SK-N-SH (cell line): ENCODE measurements at regions of chr7 and their contacts with region 1.

Region 1: DNA sequence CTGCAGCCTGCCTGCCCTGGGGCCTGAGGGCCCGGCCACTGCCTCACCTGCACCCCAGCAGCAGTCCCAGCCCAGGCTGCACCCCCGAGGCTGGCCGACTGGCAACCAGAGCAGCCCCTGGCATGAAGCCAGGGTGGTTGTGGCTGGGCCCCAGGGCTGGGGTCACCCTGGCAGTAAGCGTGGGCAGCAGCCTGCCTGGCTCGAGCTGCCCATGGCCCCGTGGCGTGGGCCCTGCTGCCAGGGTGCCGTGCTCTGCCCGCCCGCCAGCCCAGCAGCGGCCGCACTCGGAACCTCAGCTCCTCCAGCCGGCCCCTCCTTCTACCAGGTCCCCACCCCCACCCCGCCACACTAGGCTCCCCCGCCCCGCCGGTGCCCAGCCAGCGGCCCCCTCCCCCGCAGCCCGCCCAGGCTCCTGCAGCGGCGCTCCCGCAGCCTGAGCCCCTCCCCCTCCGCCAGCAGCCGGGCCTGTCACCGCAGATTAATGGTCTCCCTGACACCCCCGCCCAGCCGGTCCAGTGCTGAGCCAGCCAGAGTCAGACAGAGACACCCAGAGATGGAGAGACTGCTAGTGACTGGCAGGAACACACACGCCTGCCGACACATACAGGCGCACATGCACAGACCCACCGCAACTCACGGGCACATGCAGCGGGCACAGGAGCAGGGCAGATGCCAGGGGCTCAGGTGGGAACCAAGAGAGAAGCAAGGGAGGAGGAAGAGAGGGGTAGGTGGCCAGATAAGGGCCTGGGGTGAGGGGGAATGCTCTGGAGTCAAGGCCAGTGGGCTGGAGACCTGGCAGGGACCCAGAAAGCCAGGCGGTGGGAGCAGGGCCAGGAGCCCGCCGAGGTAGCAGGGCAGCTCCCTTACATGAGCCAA is 22.4 kb downstream of the KCNH2 start:
- DNase-seq: peak; percentile 97
- H3K4me3 ChIP-seq: peak overlapping the region in 1 of 2 experiments; percentile 45; a peak in 2 of 4 replicates
- H3K27ac ChIP-seq: peak overlapping the region in 1 of 2 experiments; percentile 94; a peak in 3 of 4 replicates
- H3K4me1 ChIP-seq: peaks cover 0 to 85% of the 10 kb centered on the region in 2 experiments; a peak in 2 of 4 replicates
- H3K27me3 ChIP-seq: peaks cover 15% of the 10 kb centered on the region; the same call in 1 of the 2 replicates
- CTCF ChIP-seq: no peak
- EP300 ChIP-seq: peak in 1 of 2 experiments; percentile 12; a peak in 1 of 4 replicates
- RAD21 ChIP-seq: peak; percentile 3; the same call in 1 of the 2 replicates

Region 2: DNA sequence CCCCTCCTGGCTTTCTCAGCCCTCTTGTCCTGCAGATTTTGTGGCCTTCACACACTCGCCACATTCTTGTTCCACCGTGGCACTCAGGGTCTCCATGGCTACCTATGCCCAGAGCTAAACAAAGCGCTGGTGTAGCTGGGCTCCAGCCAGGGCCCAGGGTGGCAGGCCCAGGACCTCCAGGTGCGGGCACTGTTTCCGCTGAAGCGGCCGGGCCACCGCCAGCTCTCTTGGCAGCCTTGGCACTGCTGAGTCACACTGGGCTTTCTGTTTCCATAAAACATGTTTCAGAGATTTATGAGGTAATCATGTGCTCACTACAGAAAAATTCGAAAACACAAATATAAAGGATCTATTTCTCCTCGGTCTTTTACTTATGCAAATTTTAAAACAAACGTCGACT is 52.2 kb before region 1 on chr7:
- CTCF ChIA-PET with region 1: interaction called, 280 read pairs
- POLR2A ChIA-PET with region 1: interaction called, 7 read pairs
- DNase-seq: peak; percentile 40
- H3K4me3 ChIP-seq: no peak overlapping the region
- H3K27ac ChIP-seq: peak overlapping the region in 1 of 2 experiments; percentile 12; a peak in 1 of 4 replicates
- H3K4me1 ChIP-seq: peaks cover 11 to 35% of the 10 kb centered on the region in 2 experiments; a peak in 3 of 4 replicates
- H3K27me3 ChIP-seq: no peaks in the 10 kb centered on the region
- CTCF ChIP-seq: no peak
- EP300 ChIP-seq: peak in 1 of 2 experiments; percentile 81; a peak in 2 of 4 replicates
- RAD21 ChIP-seq: no peak

Region 3: GRCh38 chr7:150941981-150942590 is 13.7 kb before region 1 on chr7:
- CTCF ChIA-PET with region 1: interaction called, 49 read pairs
- POLR2A ChIA-PET with region 1: interaction called, 8 read pairs
- DNase-seq: peak; percentile 71
- H3K4me3 ChIP-seq: no peak overlapping the region
- H3K27ac ChIP-seq: peak overlapping the region in 1 of 2 experiments; percentile 82; a peak in 2 of 4 replicates
- H3K4me1 ChIP-seq: peaks cover 0 to 84% of the 10 kb centered on the region in 2 experiments; a peak in 2 of 4 replicates
- H3K27me3 ChIP-seq: 0 out of 2 replicates have a peak, but pooled peaks cover 11% of the 10 kb centered on the region
- CTCF ChIP-seq: no peak
- EP300 ChIP-seq: 0 out of 4 replicates have a peak, but pooled peaks of 1 of the 2 experiments have one; percentile 17
- RAD21 ChIP-seq: no peak

Region 4: DNA sequence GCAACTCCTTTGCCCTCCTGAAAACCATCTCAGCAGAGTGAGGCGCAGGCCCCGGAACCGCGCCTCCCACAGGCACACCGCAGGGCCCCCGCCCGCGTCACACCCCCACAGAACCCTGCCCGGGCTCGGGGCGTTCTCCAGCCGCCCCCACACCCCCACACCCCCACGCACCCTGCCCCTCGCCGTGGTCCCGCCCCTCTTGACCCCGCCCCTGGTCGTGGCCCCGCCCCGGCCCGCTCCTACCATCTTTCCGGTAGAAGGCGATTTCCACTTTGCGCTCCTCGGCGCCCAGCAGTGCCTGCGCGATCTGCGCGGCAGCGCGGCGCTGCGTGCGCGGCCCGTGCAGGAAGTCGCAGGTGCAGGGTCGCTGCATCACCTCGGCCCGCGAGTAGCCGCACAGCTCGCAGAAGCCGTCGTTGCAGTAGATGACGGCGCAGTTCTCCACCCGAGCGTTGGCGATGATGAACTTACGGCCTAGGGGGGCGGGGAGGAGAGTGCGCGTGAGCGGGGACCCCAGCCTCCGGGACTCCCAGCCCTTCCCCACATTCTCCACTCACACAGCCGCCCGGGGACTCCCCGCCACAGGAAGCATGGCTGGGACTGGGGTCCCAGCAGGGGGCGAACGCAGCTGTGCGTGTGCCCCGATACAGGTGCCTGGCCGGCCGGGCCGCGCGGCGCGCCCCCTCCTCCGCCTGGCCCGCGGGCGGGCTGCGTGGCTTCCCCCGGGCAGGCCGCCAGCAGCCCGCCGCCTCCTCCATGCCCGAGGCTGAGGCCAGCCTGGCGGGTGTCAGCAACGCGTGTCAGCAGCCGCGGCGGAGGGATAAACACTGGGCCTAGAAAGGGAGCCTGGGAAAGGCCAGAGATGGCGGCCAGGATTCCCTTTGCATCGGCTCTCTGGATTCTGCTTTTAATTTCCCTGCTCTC is 19.0 kb after region 1 on chr7:
- CTCF ChIA-PET with region 1: interaction called, 761 read pairs
- POLR2A ChIA-PET with region 1: interaction called, 19 read pairs
- DNase-seq: peak; percentile 82
- H3K4me3 ChIP-seq: peak overlapping the region in 1 of 2 experiments; percentile 37; a peak in 2 of 4 replicates
- H3K27ac ChIP-seq: peak overlapping the region in 1 of 2 experiments; percentile 100; a peak in 3 of 4 replicates
- H3K4me1 ChIP-seq: peaks cover 0 to 90% of the 10 kb centered on the region in 2 experiments; a peak in 2 of 4 replicates
- H3K27me3 ChIP-seq: peaks cover 71% of the 10 kb centered on the region
- CTCF ChIP-seq: peak; percentile 36
- EP300 ChIP-seq: no peak
- RAD21 ChIP-seq: peak; percentile 38; the same call in 1 of the 2 replicates